ENCODE measurements at regions of chr5 and their contacts with region 1.

Region 1: GRCh38 chr5:61817472-61818326 is 485.6 kb downstream of the ZSWIM6 start:
- DNase-seq: peak; percentile 56
- H3K4me3 Mint-ChIP-seq: no peak overlapping the region
- H3K27ac Mint-ChIP-seq: no peak overlapping the region
- H3K4me1 Mint-ChIP-seq: peaks cover 11% of the 10 kb centered on the region
- H3K27me3 Mint-ChIP-seq: peaks cover 34% of the 10 kb centered on the region
- CTCF ChIP-seq: peak; percentile 39

Region 2: GRCh38 chr5:60960591-60960990 is 857.1 kb before region 1 on chr5:
- CTCF ChIA-PET with region 1: interaction called, 3 read pairs
- intact Hi-C with region 1: loop called (anchors 5 kb)
- DNase-seq: no peak
- H3K4me3 Mint-ChIP-seq: no peak overlapping the region
- H3K27ac Mint-ChIP-seq: no peak overlapping the region
- H3K4me1 Mint-ChIP-seq: no peaks in the 10 kb centered on the region
- H3K27me3 Mint-ChIP-seq: no peaks in the 10 kb centered on the region
- CTCF ChIP-seq: peak; percentile 39

Region 3: GRCh38 chr5:61675015-61675692 is 142.5 kb before region 1 on chr5:
- CTCF ChIA-PET with region 1: interaction called, 3 read pairs
- intact Hi-C with region 1: loop called (anchors 2 kb)
- DNase-seq: peak; percentile 53
- H3K4me3 Mint-ChIP-seq: no peak overlapping the region
- H3K27ac Mint-ChIP-seq: no peak overlapping the region
- H3K4me1 Mint-ChIP-seq: peaks cover 22% of the 10 kb centered on the region
- H3K27me3 Mint-ChIP-seq: peaks cover under 1% of the 10 kb centered on the region
- CTCF ChIP-seq: no peak

Region 4: DNA sequence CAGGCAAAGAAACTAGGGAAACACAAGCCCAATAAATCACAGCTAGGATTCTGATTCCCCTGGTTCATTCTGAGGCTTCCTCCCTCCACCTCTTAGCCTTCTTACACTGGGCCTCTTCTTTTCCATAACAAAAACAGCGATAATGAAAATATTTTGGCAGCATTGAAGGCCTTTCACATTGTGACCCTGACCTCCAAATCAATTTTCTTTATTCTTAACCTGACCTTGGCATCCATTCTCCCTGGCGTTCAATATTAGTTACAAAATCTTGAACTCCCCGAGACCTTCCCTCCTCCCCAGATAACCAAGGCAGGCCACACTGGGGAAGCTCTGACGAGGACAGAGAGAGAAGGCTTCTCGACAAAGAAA is 85.8 kb before region 1 on chr5:
- CTCF ChIA-PET with region 1: no interaction called
- intact Hi-C with region 1: loop called (anchors 5 kb)
- DNase-seq: no peak
- H3K4me3 Mint-ChIP-seq: no peak overlapping the region
- H3K27ac Mint-ChIP-seq: no peak overlapping the region
- H3K4me1 Mint-ChIP-seq: peaks cover 49% of the 10 kb centered on the region
- H3K27me3 Mint-ChIP-seq: peaks cover 39% of the 10 kb centered on the region
- CTCF ChIP-seq: no peak

Region 5: GRCh38 chr5:61768692-61769281 is 48.9 kb before region 1 on chr5:
- CTCF ChIA-PET with region 1: interaction called, 14 read pairs
- intact Hi-C with region 1: loop called (anchors 1 kb)
- DNase-seq: peak; percentile 71
- H3K4me3 Mint-ChIP-seq: no peak overlapping the region
- H3K27ac Mint-ChIP-seq: no peak overlapping the region
- H3K4me1 Mint-ChIP-seq: peaks cover 8% of the 10 kb centered on the region
- H3K27me3 Mint-ChIP-seq: peaks cover 89% of the 10 kb centered on the region
- CTCF ChIP-seq: peak; percentile 95

Region 6: DNA sequence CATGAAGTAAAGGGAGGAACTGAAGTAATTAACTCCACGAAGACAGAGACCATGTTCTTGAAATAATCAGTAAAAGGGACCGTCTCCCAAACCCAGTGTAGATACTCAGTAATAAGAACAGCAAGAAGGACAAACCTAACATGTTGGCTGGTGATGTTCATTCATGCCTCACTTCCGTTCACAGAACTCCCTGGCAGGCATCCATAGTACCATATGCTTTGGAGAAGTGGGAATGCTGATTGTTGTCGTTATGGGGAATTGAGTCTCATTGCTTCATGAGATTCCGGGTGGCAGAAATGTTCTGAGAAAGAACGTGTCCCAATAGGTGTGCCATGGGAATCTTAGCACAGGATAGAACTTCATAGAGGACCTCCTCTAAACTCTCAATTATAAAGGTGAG is 33.4 kb before region 1 on chr5:
- CTCF ChIA-PET with region 1: no interaction called
- intact Hi-C with region 1: loop called (anchors 5 kb)
- DNase-seq: no peak
- H3K4me3 Mint-ChIP-seq: no peak overlapping the region
- H3K27ac Mint-ChIP-seq: no peak overlapping the region
- H3K4me1 Mint-ChIP-seq: peaks cover 10% of the 10 kb centered on the region
- H3K27me3 Mint-ChIP-seq: peaks cover under 1% of the 10 kb centered on the region
- CTCF ChIP-seq: no peak

Region 7: GRCh38 chr5:61881821-61882487 is 64.3 kb after region 1 on chr5:
- CTCF ChIA-PET with region 1: no interaction called
- intact Hi-C with region 1: no loop called
- DNase-seq: no peak
- H3K4me3 Mint-ChIP-seq: no peak overlapping the region
- H3K27ac Mint-ChIP-seq: no peak overlapping the region
- H3K4me1 Mint-ChIP-seq: no peaks in the 10 kb centered on the region
- H3K27me3 Mint-ChIP-seq: peaks cover under 1% of the 10 kb centered on the region
- CTCF ChIP-seq: no peak

Region 8: GRCh38 chr5:61981886-61982285 is 164.2 kb after region 1 on chr5:
- CTCF ChIA-PET with region 1: no interaction called
- intact Hi-C with region 1: no loop called
- DNase-seq: no peak
- H3K4me3 Mint-ChIP-seq: no peak overlapping the region
- H3K27ac Mint-ChIP-seq: no peak overlapping the region
- H3K4me1 Mint-ChIP-seq: no peaks in the 10 kb centered on the region
- H3K27me3 Mint-ChIP-seq: peaks cover 61% of the 10 kb centered on the region
- CTCF ChIP-seq: no peak